Left cardiac atrium (tissue), 4 donors: ENCODE measurements at regions of chr7 and their contacts with region 1.

Region 1: GRCh38 chr7:38656968-38657367 is 25.8 kb upstream of the AMPH start:
- DNase-seq: no peak
- ATAC-seq: no peak

Region 2: GRCh38 chr7:38451840-38452239 is 205.1 kb before region 1 on chr7:
- intact Hi-C with region 1: loop called in 1 of 2 experiments (anchors 10 kb)
- DNase-seq: no peak
- ATAC-seq: peak; percentile 47 to 76

Region 3: DNA sequence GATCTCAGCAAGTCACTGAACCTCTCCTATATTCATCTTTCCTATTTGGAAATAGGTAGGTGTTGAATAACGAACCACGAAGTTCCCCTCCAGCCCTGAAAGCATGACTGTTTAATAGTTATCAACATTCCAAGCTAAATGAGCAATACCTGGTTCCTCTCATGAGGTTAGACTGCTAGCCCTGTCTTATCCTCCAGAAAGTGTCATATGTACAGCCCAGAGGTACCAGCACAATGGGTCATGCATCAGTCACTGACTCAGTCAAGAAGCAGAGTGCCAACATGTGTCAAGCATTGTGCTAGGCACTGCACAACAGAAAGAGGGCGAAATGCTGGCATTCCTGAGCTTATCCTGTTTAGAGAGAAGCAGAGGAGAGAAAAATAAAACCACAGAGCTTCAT is 95.8 kb before region 1 on chr7:
- intact Hi-C with region 1: no loop called
- DNase-seq: no peak
- ATAC-seq: peak in 1 of 2 donors; percentile 43